Right cardiac atrium (tissue), 5 donors: ENCODE measurements at regions of chr3 and their contacts with region 1.

Region 1: GRCh38 chr3:171038342-171039138 is 12.0 kb upstream of the SLC2A2 start:
- DNase-seq: no peak
- ATAC-seq: no peak
- H3K4me3 ChIP-seq: no peak overlapping the region
- H3K27ac ChIP-seq: no peak overlapping the region
- H3K4me1 ChIP-seq: no peaks in the 10 kb centered on the region
- H3K27me3 ChIP-seq: no peaks in the 10 kb centered on the region

Region 2: GRCh38 chr3:170961616-170962400 is 76.7 kb before region 1 on chr3:
- intact Hi-C with region 1: loop called in 1 of 4 experiments (anchors 10 kb)
- DNase-seq: no peak
- ATAC-seq: no peak
- H3K4me3 ChIP-seq: no peak overlapping the region
- H3K27ac ChIP-seq: no peak overlapping the region
- H3K4me1 ChIP-seq: no peaks in the 10 kb centered on the region
- H3K27me3 ChIP-seq: no peaks in the 10 kb centered on the region

Region 3: GRCh38 chr3:170992854-170993253 is 45.7 kb before region 1 on chr3:
- intact Hi-C with region 1: no loop called
- DNase-seq: no peak
- ATAC-seq: no peak
- H3K4me3 ChIP-seq: no peak overlapping the region
- H3K27ac ChIP-seq: no peak overlapping the region
- H3K4me1 ChIP-seq: no peaks in the 10 kb centered on the region
- H3K27me3 ChIP-seq: no peaks in the 10 kb centered on the region